PC-3 (cell line): ENCODE measurements at regions of chr10 and their contacts with region 1.

Region 1: GRCh38 chr10:108789919-108790318 is 1133.4 kb downstream of the XPNPEP1 start:
- DNase-seq: peak; percentile 94
- ATAC-seq: peak; percentile 78
- H3K4me3 ChIP-seq: no peak overlapping the region; the same call in 1 of the 2 replicates
- H3K27ac ChIP-seq: peak overlapping the region; percentile 98
- H3K4me1 ChIP-seq: peaks cover 48% of the 10 kb centered on the region
- H3K27me3 ChIP-seq: no peaks in the 10 kb centered on the region
- CTCF ChIP-seq: no peak

Region 2: DNA sequence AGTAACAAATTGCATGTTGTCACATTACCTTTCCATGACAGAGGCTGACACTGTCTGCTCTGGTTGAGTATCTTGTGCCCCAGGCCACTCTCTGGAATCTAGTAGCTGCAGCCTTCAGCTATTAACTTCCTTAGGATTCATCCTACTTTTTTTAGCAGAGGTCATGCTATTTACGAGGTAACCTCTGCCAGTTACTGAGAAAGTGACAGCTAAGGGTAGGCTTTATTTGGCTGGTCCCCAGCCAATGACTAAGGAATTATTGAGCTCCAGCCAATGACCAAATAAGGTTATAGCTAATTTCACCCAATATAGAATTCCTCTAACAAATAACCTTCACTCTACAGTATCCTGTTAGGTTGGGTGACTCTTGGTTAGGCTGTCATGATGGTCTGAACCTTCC is 228.3 kb before region 1 on chr10:
- CTCF ChIA-PET with region 1: no interaction called
- POLR2A ChIA-PET with region 1: no interaction called
- intact Hi-C with region 1: loop called (anchors 5 kb)
- DNase-seq: peak; percentile 95
- ATAC-seq: peak; percentile 84
- H3K4me3 ChIP-seq: no peak overlapping the region
- H3K27ac ChIP-seq: peak overlapping the region; percentile 57
- H3K4me1 ChIP-seq: peaks cover 32% of the 10 kb centered on the region
- H3K27me3 ChIP-seq: no peaks in the 10 kb centered on the region
- CTCF ChIP-seq: no peak

Region 3: GRCh38 chr10:108597031-108597430 is 192.9 kb before region 1 on chr10:
- CTCF ChIA-PET with region 1: no interaction called
- POLR2A ChIA-PET with region 1: no interaction called
- intact Hi-C with region 1: loop called (anchors 2 kb)
- DNase-seq: peak; percentile 77
- ATAC-seq: peak; percentile 20
- H3K4me3 ChIP-seq: peak overlapping the region; percentile 43
- H3K27ac ChIP-seq: peak overlapping the region; percentile 98
- H3K4me1 ChIP-seq: peaks cover 49% of the 10 kb centered on the region
- H3K27me3 ChIP-seq: no peaks in the 10 kb centered on the region
- CTCF ChIP-seq: no peak

Region 4: DNA sequence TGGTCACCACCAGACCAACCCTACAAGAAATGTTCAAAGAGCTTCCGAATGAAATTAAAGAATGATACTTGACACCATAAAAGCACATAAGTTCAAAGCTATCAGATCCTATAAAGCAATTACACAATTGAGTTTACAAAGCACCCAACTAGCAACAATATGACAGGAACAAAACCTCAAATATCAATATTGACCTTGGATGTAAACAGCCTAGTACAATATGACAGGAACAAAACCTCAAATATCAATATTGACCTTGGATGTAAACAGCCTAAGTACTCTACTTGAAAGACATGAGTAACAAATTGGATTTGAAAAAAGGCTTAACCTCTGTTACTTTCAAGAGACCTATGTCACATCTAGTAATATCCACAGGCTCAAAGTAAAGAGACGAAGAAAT is 68.0 kb before region 1 on chr10:
- CTCF ChIA-PET with region 1: no interaction called
- POLR2A ChIA-PET with region 1: no interaction called
- intact Hi-C with region 1: loop called (anchors 5 kb)
- DNase-seq: peak; percentile 60
- ATAC-seq: peak; percentile 96
- H3K4me3 ChIP-seq: no peak overlapping the region
- H3K27ac ChIP-seq: no peak overlapping the region; the same call in 1 of the 2 replicates
- H3K4me1 ChIP-seq: no peaks in the 10 kb centered on the region
- H3K27me3 ChIP-seq: no peaks in the 10 kb centered on the region
- CTCF ChIP-seq: no peak

Region 5: GRCh38 chr10:108911814-108912541 is 122.1 kb after region 1 on chr10:
- CTCF ChIA-PET with region 1: no interaction called
- POLR2A ChIA-PET with region 1: interaction called, 4 read pairs
- intact Hi-C with region 1: loop called (anchors 1 kb)
- DNase-seq: peak; percentile 82
- ATAC-seq: peak; percentile 99
- H3K4me3 ChIP-seq: peak overlapping the region; percentile 81
- H3K27ac ChIP-seq: no peak overlapping the region
- H3K4me1 ChIP-seq: no peaks in the 10 kb centered on the region
- H3K27me3 ChIP-seq: no peaks in the 10 kb centered on the region
- CTCF ChIP-seq: peak; percentile 74